Head of caudate nucleus (tissue), 42 donors: ENCODE measurements at regions of chr5 and their contacts with region 1.

Region 1: GRCh38 chr5:78359831-78360673 is at the start of gene SCAMP1:
- DNase-seq: peak; percentile 71 to 96 (median 91)

Region 2: GRCh38 chr5:78294248-78295034 is 65.6 kb before region 1 on chr5 and contains the start of gene AP3B1:
- intact Hi-C with region 1: loop called (anchors 1 kb)
- DNase-seq: peak; percentile 92 to 99 (median 97)